Gastrocnemius medialis (tissue), 4 donors: ENCODE measurements at regions of chr9 and their contacts with region 1.

Region 1: GRCh38 chr9:107600060-107600573 is 110.5 kb upstream of the KLF4 start:
- DNase-seq: no peak
- ATAC-seq: peak; percentile 56 to 77
- H3K4me3 ChIP-seq: no peak overlapping the region
- H3K27ac ChIP-seq: peak overlapping the region; percentile 7 to 59 (median 40)
- H3K4me1 ChIP-seq: no peaks in the 10 kb centered on the region
- H3K27me3 ChIP-seq: no peaks in the 10 kb centered on the region
- CTCF ChIP-seq: no peak
- POLR2A ChIP-seq: no peak

Region 2: GRCh38 chr9:107667231-107668070 is 67.3 kb after region 1 on chr9:
- in situ Hi-C with region 1: no loop called
- intact Hi-C with region 1: loop called (anchors 10 kb)
- DNase-seq: no peak
- ATAC-seq: peak; percentile 53 to 55
- H3K4me3 ChIP-seq: no peak overlapping the region
- H3K27ac ChIP-seq: peak overlapping the region; percentile 8 to 72 (median 63)
- H3K4me1 ChIP-seq: no peaks in the 10 kb centered on the region
- H3K27me3 ChIP-seq: no peaks in the 10 kb centered on the region
- CTCF ChIP-seq: no peak
- POLR2A ChIP-seq: peak in 1 of 2 donors; percentile 29

Region 3: DNA sequence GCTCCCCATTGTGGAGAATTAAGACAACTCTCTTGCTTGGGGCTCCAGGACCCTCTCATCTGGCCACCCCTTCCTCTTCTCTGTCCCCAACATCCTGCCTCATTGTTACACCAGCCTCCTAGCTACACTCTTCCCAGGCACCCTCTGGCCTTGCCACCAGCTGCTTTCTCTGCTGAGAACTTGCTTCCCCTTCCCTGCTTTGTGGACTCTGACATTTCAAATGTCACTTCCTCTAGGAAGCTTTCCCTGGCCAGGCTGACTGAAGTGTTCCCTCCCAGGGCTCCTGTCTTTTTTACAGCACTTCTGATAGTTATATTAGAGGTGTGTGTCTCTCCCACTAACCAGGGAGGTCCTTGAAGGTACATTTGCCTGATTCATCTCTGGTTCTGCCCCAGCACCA is 83.4 kb after region 1 on chr9:
- in situ Hi-C with region 1: no loop called
- intact Hi-C with region 1: no loop called
- DNase-seq: no peak
- ATAC-seq: no peak
- H3K4me3 ChIP-seq: no peak overlapping the region
- H3K27ac ChIP-seq: no peak overlapping the region
- H3K4me1 ChIP-seq: peaks cover 0 to 10% of the 10 kb centered on the region in 2 donors
- H3K27me3 ChIP-seq: no peaks in the 10 kb centered on the region
- CTCF ChIP-seq: no peak
- POLR2A ChIP-seq: no peak

Region 4: GRCh38 chr9:107693625-107694326 is 93.7 kb after region 1 on chr9:
- in situ Hi-C with region 1: no loop called
- intact Hi-C with region 1: no loop called
- DNase-seq: no peak
- ATAC-seq: no peak
- H3K4me3 ChIP-seq: no peak overlapping the region
- H3K27ac ChIP-seq: no peak overlapping the region
- H3K4me1 ChIP-seq: no peaks in the 10 kb centered on the region
- H3K27me3 ChIP-seq: no peaks in the 10 kb centered on the region
- CTCF ChIP-seq: no peak
- POLR2A ChIP-seq: no peak